Heart right ventricle (tissue), 16 donors: ENCODE measurements at regions of chr3 and their contacts with region 1.

Region 1: DNA sequence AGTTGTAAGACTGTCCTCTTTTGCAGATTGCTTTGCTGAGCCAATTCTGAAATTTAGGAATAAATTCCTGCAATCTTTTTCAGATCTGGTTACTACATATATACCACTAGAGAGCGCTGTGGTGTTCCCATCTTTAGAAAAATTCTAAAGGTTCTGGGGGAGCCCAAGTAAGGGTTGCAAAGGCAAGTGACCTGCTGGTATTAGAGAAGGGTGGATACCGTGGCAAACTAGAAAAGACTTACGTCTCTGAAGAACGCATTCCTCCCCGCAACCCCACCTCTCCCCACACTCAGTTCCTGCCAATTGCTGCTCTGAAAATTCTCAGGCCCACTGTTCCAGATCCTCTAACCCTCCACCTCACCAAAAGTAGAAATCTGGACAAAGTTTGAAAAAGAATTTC is 48.5 kb downstream of the EFHB start:
- DNase-seq: peak in 1 of 2 donors; percentile 8
- ATAC-seq: no peak
- H3K4me3 ChIP-seq: no peak overlapping the region
- H3K27ac ChIP-seq: no peak overlapping the region
- H3K4me1 ChIP-seq: peaks cover 0 to 26% (median 13%) of the 10 kb centered on the region in 9 donors
- H3K27me3 ChIP-seq: no peaks in the 10 kb centered on the region
- CTCF ChIP-seq: peak; percentile 18 to 67 (median 56)

Region 2: GRCh38 chr3:19825193-19825592 is 60.3 kb before region 1 on chr3:
- intact Hi-C with region 1: no loop called
- DNase-seq: no peak
- ATAC-seq: no peak
- H3K4me3 ChIP-seq: no peak overlapping the region
- H3K27ac ChIP-seq: no peak overlapping the region
- H3K4me1 ChIP-seq: no peaks in the 10 kb centered on the region
- H3K27me3 ChIP-seq: no peaks in the 10 kb centered on the region
- CTCF ChIP-seq: no peak

Region 3: GRCh38 chr3:19946832-19947548 is 61.5 kb after region 1 on chr3 and contains the start of gene RAB5A:
- intact Hi-C with region 1: loop called in 3 of 10 experiments (anchors 2 to 5 kb)
- DNase-seq: peak; percentile 96 to 98
- ATAC-seq: peak; percentile 97 to 99 (median 98)
- H3K4me3 ChIP-seq: peak within 1 kb of the TSS; percentile 79 to 99 (median 98)
- H3K27ac ChIP-seq: peak within 1 kb of the TSS; percentile 89 to 99 (median 98)
- H3K4me1 ChIP-seq: peaks cover 0 to 44% (median 35%) of the 10 kb centered on the region in 9 donors
- H3K27me3 ChIP-seq: no peaks in the 10 kb centered on the region
- CTCF ChIP-seq: peak in 1 of 9 donors; percentile 1
- total RNA-seq, gene RAB5A: 52.2 to 80.9 (median 66.9) TPM

Region 4: GRCh38 chr3:20023623-20024405 is 138.3 kb after region 1 on chr3:
- intact Hi-C with region 1: loop called in 1 of 10 experiments (anchors 5 kb)
- DNase-seq: peak; percentile 36 to 47
- ATAC-seq: peak; percentile 84 to 98 (median 95)
- H3K4me3 ChIP-seq: no peak overlapping the region
- H3K27ac ChIP-seq: peak overlapping the region in 9 of 10 donors; percentile 11 to 84 (median 63)
- H3K4me1 ChIP-seq: peaks cover 0 to 38% (median 21%) of the 10 kb centered on the region in 9 donors
- H3K27me3 ChIP-seq: no peaks in the 10 kb centered on the region
- CTCF ChIP-seq: no peak

Region 5: DNA sequence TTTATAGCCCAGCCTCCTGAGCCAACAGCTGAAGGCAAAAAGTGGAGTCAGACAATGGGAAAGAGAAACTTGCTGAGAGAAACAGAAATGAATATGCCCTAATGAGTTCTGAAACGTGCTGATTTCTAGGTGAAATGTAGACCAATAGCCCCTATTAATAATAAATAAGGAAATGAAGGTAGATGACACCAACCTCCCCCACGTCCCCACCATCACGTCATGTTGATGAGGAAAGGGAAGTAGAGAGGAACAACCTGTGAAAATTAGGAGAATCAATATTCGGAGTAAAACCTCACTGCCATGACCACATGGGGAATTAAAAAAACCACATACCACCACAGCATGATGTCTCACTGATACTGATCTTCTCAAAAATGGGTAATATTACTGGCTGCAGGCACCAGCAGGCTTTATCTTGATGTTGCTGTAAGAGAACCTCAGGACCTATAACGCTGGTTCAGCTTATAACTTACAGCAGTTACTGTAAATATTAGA is 218.7 kb after region 1 on chr3:
- intact Hi-C with region 1: loop called in 1 of 10 experiments (anchors 10 kb)
- DNase-seq: no peak
- ATAC-seq: peak in 1 of 8 donors; percentile 11
- H3K4me3 ChIP-seq: no peak overlapping the region
- H3K27ac ChIP-seq: peak overlapping the region in 1 of 10 donors; percentile 41
- H3K4me1 ChIP-seq: peaks cover 0 to 22% (median 0%) of the 10 kb centered on the region in 9 donors
- H3K27me3 ChIP-seq: no peaks in the 10 kb centered on the region
- CTCF ChIP-seq: no peak

Region 6: GRCh38 chr3:20185701-20186598 is 300.5 kb after region 1 on chr3 and contains the start of gene SGO1:
- intact Hi-C with region 1: loop called in 2 of 10 experiments (anchors 2 to 5 kb)
- DNase-seq: peak; percentile 99
- ATAC-seq: peak; percentile 100
- H3K4me3 ChIP-seq: peak within 1 kb of the TSS; percentile 37 to 83 (median 68)
- H3K27ac ChIP-seq: peak within 1 kb of the TSS; percentile 75 to 97 (median 92)
- H3K4me1 ChIP-seq: peaks cover 0 to 22% (median 16%) of the 10 kb centered on the region in 9 donors
- H3K27me3 ChIP-seq: no peaks in the 10 kb centered on the region
- CTCF ChIP-seq: peak in 2 of 9 donors; percentile 22 to 26
- total RNA-seq, gene SGO1: 0.25 to 2.2 (median 0.50) TPM in 6 of 10 donors, not detected in the others